ENCODE measurements at regions of chr11 and their contacts with region 1.

Region 1: GRCh38 chr11:62694455-62695167 is 5.3 kb upstream of the LRRN4CL start:
- DNase-seq: peak; percentile 55
- ATAC-seq: peak; percentile 88
- H3K4me3 Mint-ChIP-seq: no peak overlapping the region
- H3K27ac Mint-ChIP-seq: no peak overlapping the region
- H3K4me1 Mint-ChIP-seq: peaks cover 5% of the 10 kb centered on the region
- H3K27me3 Mint-ChIP-seq: no peaks in the 10 kb centered on the region
- CTCF ChIP-seq: no peak

Region 2: GRCh38 chr11:62394825-62395538 is 299.6 kb before region 1 on chr11:
- CTCF ChIA-PET with region 1: interaction called, 37 read pairs
- POLR2A ChIA-PET with region 1: no interaction called
- intact Hi-C with region 1: loop called (anchors 1 kb)
- DNase-seq: no peak
- ATAC-seq: peak; percentile 79
- H3K4me3 Mint-ChIP-seq: no peak overlapping the region
- H3K27ac Mint-ChIP-seq: no peak overlapping the region
- H3K4me1 Mint-ChIP-seq: no peaks in the 10 kb centered on the region
- H3K27me3 Mint-ChIP-seq: peaks cover 6% of the 10 kb centered on the region
- CTCF ChIP-seq: no peak

Region 3: DNA sequence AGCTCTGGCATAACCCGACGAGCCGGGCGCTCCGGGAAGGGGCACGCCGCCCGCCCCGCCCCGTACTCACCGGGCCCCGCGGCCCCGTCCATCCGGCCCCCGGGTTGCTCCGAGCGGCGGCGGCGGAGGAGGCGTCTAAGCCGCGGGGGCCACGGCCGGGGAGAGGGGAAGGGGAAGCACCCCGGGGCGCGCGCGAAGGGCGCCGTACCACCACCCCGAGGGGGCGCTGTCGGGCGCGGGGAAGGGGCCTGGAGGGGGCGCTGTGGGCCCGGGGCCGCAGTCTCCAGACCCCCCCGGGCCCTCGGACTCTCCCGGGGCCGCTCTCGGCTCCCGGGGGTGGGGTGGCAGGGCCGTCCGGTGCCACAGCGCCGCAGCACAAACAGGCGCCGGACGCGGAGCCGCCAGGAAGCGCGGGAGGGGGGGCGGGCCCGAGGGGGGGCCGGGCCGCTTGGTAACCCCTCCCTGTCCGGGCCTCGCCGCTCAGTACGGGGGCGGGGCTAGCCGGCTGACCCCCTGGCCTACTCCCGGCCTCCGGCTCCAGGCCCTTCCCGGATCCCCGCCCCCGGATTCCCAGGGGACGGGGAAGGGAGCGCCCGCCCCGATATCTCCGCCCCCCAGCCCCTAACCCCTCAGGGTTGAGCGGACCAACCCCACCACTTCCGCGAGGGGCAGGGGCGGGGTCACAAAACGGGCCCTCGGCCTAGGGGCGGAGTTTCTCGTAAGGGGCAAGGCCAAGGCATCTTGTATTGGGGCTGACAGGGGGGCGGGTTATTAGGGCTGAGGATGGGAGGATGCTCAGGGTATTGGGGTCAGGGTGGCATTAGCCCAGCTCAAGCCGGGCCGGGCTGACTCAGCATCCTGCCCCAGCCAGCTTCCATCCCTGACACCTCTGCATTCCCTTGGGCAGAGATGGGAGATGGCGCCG is 82.0 kb before region 1 on chr11 and contains the starts of genes EML3 and ROM1:
- CTCF ChIA-PET with region 1: no interaction called
- POLR2A ChIA-PET with region 1: no interaction called
- intact Hi-C with region 1: loop called (anchors 1 kb)
- DNase-seq: peak; percentile 95
- ATAC-seq: peak; percentile 82
- H3K4me3 Mint-ChIP-seq: peak within 1 kb of the TSS; percentile 93
- H3K27ac Mint-ChIP-seq: peak within 1 kb of the TSS; percentile 95
- H3K4me1 Mint-ChIP-seq: peaks cover 27% of the 10 kb centered on the region
- H3K27me3 Mint-ChIP-seq: no peaks in the 10 kb centered on the region
- CTCF ChIP-seq: peak; percentile 59
- total RNA-seq, gene EML3: 115 and 128 TPM in 2 replicates
- total RNA-seq, gene ROM1: 0.89 and 2.6 TPM in 2 replicates

Region 4: GRCh38 chr11:62678770-62679696 is 15.6 kb before region 1 on chr11 and contains the start of gene UBXN1:
- CTCF ChIA-PET with region 1: interaction called, 21 read pairs
- POLR2A ChIA-PET with region 1: interaction called, 11 read pairs
- intact Hi-C with region 1: loop called (anchors 1 kb)
- DNase-seq: peak; percentile 77
- ATAC-seq: peak; percentile 74
- H3K4me3 Mint-ChIP-seq: peak within 1 kb of the TSS; percentile 91
- H3K27ac Mint-ChIP-seq: peak within 1 kb of the TSS; percentile 96
- H3K4me1 Mint-ChIP-seq: peaks cover 41% of the 10 kb centered on the region
- H3K27me3 Mint-ChIP-seq: no peaks in the 10 kb centered on the region
- CTCF ChIP-seq: no peak
- total RNA-seq, gene UBXN1: 204 and 205 TPM in 2 replicates

Region 5: DNA sequence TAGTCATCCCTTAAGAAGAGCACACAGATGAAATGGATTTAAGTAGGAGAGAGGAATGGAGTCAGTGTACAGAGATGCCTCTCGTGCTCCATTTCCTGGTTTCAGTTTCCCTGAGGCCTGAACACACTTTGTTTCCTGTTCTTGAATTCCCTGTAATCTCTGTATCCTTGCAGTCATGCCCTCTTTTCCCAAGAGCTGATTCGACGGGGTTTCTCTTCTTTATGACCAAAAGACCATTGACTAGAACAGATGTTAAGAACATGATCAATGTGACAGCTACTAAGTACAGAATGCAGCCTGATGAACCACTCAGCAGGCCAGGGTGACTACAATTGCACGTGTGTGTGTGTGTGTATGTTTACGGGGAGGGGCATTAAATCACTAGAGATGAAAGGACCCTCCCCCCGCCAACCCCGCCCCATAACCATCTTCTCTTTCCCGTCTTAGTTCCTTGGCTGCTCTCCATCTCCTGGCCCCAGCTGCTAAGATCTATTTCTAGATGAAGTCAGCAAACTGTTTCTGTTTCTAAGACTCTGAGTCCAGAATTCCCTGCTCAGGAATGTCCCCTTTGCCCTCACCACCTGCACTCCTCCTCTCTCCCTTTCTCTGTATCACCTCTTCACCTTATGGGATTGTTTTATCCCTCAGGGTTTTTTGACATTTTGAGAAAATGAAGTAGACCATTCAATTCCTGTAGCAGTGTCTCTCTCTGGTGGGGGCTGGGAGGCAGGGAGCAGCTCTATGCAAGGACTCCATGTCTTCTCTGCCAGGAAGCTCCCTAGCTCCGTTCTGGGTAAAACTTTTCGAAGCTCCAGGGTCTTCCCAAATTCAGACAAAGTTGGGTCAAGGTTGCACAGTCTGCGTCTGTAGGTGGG is 264.2 kb after region 1 on chr11:
- CTCF ChIA-PET with region 1: no interaction called
- POLR2A ChIA-PET with region 1: no interaction called
- intact Hi-C with region 1: no loop called
- DNase-seq: no peak
- ATAC-seq: no peak
- H3K4me3 Mint-ChIP-seq: no peak overlapping the region
- H3K27ac Mint-ChIP-seq: no peak overlapping the region
- H3K4me1 Mint-ChIP-seq: no peaks in the 10 kb centered on the region
- H3K27me3 Mint-ChIP-seq: peaks cover 38% of the 10 kb centered on the region
- CTCF ChIP-seq: no peak